ENCODE measurements at regions of chr5 and their contacts with region 1.

Region 1: DNA sequence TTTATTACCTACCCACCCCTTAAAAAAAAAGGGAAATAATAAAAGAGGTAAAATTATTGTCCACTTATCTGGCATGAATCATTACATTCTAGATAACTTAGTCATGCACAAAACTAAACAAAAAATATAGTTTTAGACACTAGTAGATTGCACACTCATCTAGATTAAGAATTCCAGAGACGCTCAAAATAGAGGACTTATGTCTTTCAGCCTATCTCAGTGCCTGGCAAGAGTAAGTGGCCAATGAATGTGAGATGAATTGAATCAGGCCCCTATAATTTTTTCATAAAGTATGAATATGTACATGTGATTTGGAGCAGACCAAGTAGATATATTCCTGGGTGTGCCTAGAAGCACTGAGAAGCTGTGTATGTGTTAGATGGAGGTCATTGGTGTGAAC is 2.0 kb upstream of the RXFP3 start:
- DNase-seq: no peak
- ATAC-seq: no peak
- H3K4me3 ChIP-seq: no peak overlapping the region
- H3K27ac ChIP-seq: no peak overlapping the region
- H3K4me1 ChIP-seq: peaks cover 10% of the 10 kb centered on the region
- H3K27me3 ChIP-seq: peaks cover 0 to 65% (median 22%) of the 10 kb centered on the region in 3 donors
- CTCF ChIP-seq: no peak

Region 2: GRCh38 chr5:33433303-33434240 is 500.6 kb before region 1 on chr5:
- intact Hi-C with region 1: loop called (anchors 2 to 5 kb)
- DNase-seq: no peak
- ATAC-seq: no peak
- H3K4me3 ChIP-seq: no peak overlapping the region
- H3K27ac ChIP-seq: no peak overlapping the region
- H3K4me1 ChIP-seq: no peaks in the 10 kb centered on the region
- H3K27me3 ChIP-seq: no peaks in the 10 kb centered on the region
- CTCF ChIP-seq: no peak

Region 3: DNA sequence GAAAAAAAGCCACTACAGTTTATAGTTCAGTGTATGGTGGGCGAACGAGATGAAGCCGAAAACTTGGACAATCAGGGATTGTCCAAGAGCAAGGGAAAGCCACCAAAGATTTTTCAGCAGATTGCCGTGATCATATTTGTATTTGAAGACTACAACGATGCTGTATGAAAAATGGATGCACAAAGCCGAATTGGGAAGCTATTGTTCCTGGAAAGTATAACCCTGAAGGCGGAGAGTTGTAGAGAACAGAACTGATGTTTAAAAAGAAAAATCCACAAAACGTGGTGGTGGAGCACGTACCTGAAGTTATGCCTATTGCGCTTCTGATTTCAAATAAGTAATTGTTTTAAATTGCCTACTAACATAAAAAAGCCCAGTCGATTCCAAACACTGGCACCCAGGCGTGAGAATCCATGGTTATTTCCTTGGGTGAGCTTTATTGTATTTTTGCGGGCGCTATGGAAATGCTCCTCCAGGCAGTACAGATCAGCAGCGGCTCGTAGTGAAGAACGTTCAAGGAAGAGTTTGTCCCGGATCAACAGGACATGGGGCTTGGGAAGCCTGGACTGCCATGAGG is 494.2 kb before region 1 on chr5:
- intact Hi-C with region 1: loop called (anchors 2 to 5 kb)
- DNase-seq: no peak
- ATAC-seq: no peak
- H3K4me3 ChIP-seq: peak overlapping the region; percentile 79
- H3K27ac ChIP-seq: peak overlapping the region; percentile 83
- H3K4me1 ChIP-seq: peaks cover 26% of the 10 kb centered on the region
- H3K27me3 ChIP-seq: no peaks in the 10 kb centered on the region
- CTCF ChIP-seq: no peak

Measured in psoas muscle (tissue), 8 donors.